Calu3 (cell line): ENCODE measurements at regions of chr16 and their contacts with region 1.

Region 1: DNA sequence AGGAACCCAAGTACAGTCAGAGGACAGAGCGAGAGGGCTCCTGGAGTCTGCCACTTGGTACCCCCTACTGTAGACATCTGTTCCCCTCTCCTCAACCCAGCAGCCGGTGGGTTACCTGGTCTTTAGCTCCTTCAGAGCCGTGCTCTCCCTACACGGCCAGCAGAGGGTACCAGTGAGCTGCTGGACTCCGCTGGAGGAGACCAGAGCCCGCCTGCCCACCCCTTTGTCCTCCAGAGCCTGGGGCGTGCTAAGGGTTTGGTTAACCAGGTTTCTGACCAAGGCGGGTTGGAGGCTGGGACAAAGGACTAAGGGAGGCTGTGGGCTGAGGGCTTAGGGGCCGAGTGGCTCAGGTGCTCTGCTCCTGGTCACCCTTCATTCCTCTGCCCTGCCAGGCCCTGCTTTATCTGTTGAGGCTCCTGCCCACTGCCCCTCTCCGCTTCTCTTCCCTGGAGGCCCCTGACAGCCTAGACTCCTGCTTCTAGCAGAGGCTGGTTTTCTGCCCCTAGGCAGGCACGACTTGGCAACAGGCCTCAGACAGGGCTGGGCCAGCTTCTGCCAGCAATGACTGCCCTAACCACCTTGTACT is 2.7 kb upstream of the HSD11B2 start:
- DNase-seq: peak; percentile 90
- H3K4me3 Mint-ChIP-seq: no peak overlapping the region
- H3K27ac Mint-ChIP-seq: no peak overlapping the region
- H3K4me1 Mint-ChIP-seq: peaks cover 29% of the 10 kb centered on the region
- H3K27me3 Mint-ChIP-seq: peaks cover 26% of the 10 kb centered on the region
- CTCF ChIP-seq: peak; percentile 82

Region 2: GRCh38 chr16:66810391-66810790 is 617.8 kb before region 1 on chr16:
- CTCF ChIA-PET with region 1: no interaction called
- intact Hi-C with region 1: no loop called
- DNase-seq: no peak
- H3K4me3 Mint-ChIP-seq: no peak overlapping the region
- H3K27ac Mint-ChIP-seq: no peak overlapping the region
- H3K4me1 Mint-ChIP-seq: no peaks in the 10 kb centered on the region
- H3K27me3 Mint-ChIP-seq: no peaks in the 10 kb centered on the region
- CTCF ChIP-seq: no peak

Region 3: DNA sequence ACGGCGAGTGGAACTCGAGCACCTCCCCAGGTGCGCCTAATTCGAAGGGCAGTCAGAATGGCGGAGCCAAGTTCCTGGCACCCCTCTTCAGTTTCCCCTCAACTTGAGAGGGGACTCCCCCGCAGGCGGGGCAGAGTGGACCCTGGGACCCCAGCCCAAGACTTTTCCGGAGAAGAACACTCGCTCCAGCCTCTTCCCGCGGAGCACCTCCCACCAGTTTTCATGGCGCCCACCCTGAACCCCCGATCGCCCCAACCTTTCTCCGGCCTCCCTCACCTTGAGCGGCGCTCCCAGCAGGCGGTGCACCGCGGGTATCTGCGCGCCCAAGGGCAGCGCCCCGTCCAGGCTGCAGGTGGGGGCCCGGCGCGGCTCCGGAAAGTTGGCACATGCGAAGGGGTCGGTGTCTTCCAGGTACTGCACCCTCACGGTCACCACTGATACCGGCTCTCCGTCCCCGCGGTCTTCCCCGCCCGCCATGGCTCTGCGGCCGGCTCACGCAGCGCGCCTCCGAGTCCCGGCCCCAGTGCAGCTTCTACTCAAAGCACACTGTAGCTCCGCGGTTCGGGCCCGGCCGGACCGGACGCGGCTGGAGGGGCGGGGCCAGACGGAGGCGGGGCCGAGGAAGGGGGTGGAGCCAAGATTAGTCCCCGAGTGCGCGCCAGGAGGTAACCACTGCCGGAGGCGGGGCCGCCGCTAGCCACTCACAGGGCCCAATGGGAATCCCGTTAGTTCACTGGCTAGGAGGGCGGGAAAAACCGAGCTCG is 181.1 kb before region 1 on chr16 and contains the start of gene FHOD1:
- CTCF ChIA-PET with region 1: interaction called, 11 read pairs
- intact Hi-C with region 1: no loop called
- DNase-seq: peak; percentile 99
- H3K4me3 Mint-ChIP-seq: peak within 1 kb of the TSS; percentile 94
- H3K27ac Mint-ChIP-seq: peak within 1 kb of the TSS; percentile 85
- H3K4me1 Mint-ChIP-seq: peaks cover 54% of the 10 kb centered on the region
- H3K27me3 Mint-ChIP-seq: peaks cover 38% of the 10 kb centered on the region
- CTCF ChIP-seq: no peak
- total RNA-seq, gene FHOD1: 37.2 and 37.9 TPM in 2 replicates

Region 4: GRCh38 chr16:67389911-67390825 is 38.1 kb before region 1 on chr16:
- CTCF ChIA-PET with region 1: no interaction called
- intact Hi-C with region 1: no loop called
- DNase-seq: no peak
- H3K4me3 Mint-ChIP-seq: no peak overlapping the region
- H3K27ac Mint-ChIP-seq: no peak overlapping the region
- H3K4me1 Mint-ChIP-seq: peaks cover 32% of the 10 kb centered on the region
- H3K27me3 Mint-ChIP-seq: no peaks in the 10 kb centered on the region
- CTCF ChIP-seq: no peak

Region 5: GRCh38 chr16:67441271-67441753 is 13.1 kb after region 1 on chr16:
- CTCF ChIA-PET with region 1: interaction called, 20 read pairs
- intact Hi-C with region 1: no loop called
- DNase-seq: peak; percentile 79
- H3K4me3 Mint-ChIP-seq: no peak overlapping the region
- H3K27ac Mint-ChIP-seq: no peak overlapping the region
- H3K4me1 Mint-ChIP-seq: peaks cover 15% of the 10 kb centered on the region
- H3K27me3 Mint-ChIP-seq: no peaks in the 10 kb centered on the region
- CTCF ChIP-seq: no peak

Region 6: DNA sequence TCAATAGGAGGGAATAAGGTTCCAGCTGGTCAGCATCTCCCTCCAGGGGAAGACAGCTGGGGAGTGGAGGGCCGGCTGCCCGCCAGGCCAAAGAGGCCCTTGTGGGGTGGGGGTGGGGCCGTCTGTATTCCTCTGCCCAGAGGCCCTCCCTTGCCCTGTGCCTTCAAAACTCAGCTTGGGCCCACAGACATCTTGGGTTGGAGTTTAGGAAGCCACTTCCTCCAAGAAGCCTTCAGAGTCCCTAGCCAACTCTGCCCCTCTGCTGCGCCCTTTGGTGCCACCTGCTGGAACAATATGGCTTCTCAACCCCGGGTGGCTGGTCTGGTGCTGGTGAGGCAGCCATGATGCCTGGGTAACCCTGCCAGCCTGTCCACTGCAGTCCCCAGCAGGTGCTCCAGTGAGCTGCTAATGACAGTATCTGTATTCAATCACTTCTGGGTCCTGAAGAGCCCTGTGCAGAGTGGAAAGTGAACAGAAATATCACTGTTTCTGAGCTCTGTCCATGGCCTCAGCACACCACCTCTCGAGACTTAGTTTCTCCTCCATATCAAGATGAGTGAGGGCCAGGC is 19.4 kb after region 1 on chr16:
- CTCF ChIA-PET with region 1: interaction called, 20 read pairs
- intact Hi-C with region 1: no loop called
- DNase-seq: peak; percentile 87
- H3K4me3 Mint-ChIP-seq: no peak overlapping the region
- H3K27ac Mint-ChIP-seq: no peak overlapping the region
- H3K4me1 Mint-ChIP-seq: peaks cover 22% of the 10 kb centered on the region
- H3K27me3 Mint-ChIP-seq: no peaks in the 10 kb centered on the region
- CTCF ChIP-seq: peak; percentile 79

Region 7: GRCh38 chr16:67461600-67462592 is 33.7 kb after region 1 on chr16:
- CTCF ChIA-PET with region 1: interaction called, 34 read pairs
- intact Hi-C with region 1: loop called (anchors 1 kb)
- DNase-seq: peak; percentile 61
- H3K4me3 Mint-ChIP-seq: peak overlapping the region; percentile 32
- H3K27ac Mint-ChIP-seq: peak overlapping the region; percentile 52
- H3K4me1 Mint-ChIP-seq: peaks cover 46% of the 10 kb centered on the region
- H3K27me3 Mint-ChIP-seq: no peaks in the 10 kb centered on the region
- CTCF ChIP-seq: no peak

Region 8: GRCh38 chr16:67470359-67470758 is 42.1 kb after region 1 on chr16:
- CTCF ChIA-PET with region 1: interaction called, 34 read pairs
- intact Hi-C with region 1: loop called (anchors 1 kb)
- DNase-seq: no peak
- H3K4me3 Mint-ChIP-seq: no peak overlapping the region
- H3K27ac Mint-ChIP-seq: no peak overlapping the region
- H3K4me1 Mint-ChIP-seq: peaks cover 6% of the 10 kb centered on the region
- H3K27me3 Mint-ChIP-seq: no peaks in the 10 kb centered on the region
- CTCF ChIP-seq: no peak

Region 9: DNA sequence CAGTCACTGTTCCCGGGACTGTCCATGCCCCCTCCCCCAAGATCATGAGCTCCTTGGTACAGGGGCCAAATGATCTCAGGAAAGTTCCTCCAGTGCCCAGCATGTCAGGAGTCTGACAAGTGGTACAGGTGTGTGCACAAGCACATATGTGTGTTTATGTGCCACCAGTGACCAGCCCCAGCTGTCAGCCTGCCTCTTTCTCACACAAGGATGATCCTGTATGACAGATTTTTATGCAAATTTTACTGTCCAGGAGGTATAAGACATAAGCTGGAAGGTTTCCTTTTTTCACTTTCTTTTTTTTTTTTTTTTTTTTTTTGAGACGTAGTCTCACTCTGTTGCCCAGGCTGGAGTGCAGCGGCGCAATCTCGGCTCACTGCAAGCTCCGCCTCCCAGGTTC is 322.2 kb after region 1 on chr16:
- CTCF ChIA-PET with region 1: no interaction called
- intact Hi-C with region 1: no loop called
- DNase-seq: no peak
- H3K4me3 Mint-ChIP-seq: no peak overlapping the region
- H3K27ac Mint-ChIP-seq: no peak overlapping the region
- H3K4me1 Mint-ChIP-seq: no peaks in the 10 kb centered on the region
- H3K27me3 Mint-ChIP-seq: no peaks in the 10 kb centered on the region
- CTCF ChIP-seq: no peak